BJ (cell line): ENCODE measurements at regions of chr3 and their contacts with region 1.

Region 1: GRCh38 chr3:56702490-56703315 is 19.6 kb upstream of the TASOR start:
- DNase-seq: peak; percentile 12
- H3K4me3 ChIP-seq: no peak overlapping the region
- H3K27me3 ChIP-seq: no peaks in the 10 kb centered on the region
- CTCF ChIP-seq: peak; percentile 78

Region 2: DNA sequence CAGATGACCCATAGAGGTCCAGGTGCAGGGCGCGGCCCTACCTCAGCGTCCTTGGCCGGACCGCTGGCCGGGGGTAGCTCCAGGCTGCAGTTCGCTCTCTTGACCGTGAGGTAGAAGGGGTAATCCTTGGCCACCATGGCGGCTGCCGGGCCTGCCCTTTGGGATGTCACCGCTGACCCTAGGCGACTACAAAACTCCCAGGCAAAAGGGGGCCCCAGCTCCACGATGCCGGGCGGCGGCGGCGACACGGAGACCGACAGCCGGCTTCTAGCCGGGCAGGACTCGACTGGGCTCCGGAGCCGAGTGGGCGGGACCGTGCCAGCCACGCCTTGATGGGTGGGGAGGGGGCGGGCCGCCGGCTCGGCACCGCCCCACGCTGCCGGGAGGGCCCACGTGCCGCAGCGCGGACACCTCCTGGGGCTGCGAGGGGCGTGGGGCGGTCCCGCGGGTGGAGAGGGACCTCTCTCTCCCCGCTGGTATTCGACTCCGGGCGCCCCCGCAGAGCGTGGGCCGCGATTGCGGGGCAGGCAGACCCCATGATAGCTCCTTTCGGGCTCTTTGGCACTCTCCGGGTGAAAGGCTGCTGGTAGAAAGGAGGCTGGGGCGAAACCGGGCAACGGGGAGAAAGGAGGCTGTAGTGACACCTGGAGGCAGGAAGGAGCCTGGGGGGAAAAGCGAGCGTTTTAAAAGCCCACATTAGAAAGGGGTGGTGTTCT is 99.1 kb after region 1 on chr3 and contains the start of gene ARHGEF3:
- CTCF ChIA-PET with region 1: interaction called, 136 read pairs
- POLR2A ChIA-PET with region 1: no interaction called
- DNase-seq: no peak
- H3K4me3 ChIP-seq: peak within 1 kb of the TSS; percentile 50
- H3K27me3 ChIP-seq: 0 out of 2 replicates have a peak, but pooled peaks cover 1% of the 10 kb centered on the region
- CTCF ChIP-seq: peak; percentile 49
- polyA plus RNA-seq, gene ARHGEF3: 2.0 and 2.1 TPM in 2 replicates

Region 3: DNA sequence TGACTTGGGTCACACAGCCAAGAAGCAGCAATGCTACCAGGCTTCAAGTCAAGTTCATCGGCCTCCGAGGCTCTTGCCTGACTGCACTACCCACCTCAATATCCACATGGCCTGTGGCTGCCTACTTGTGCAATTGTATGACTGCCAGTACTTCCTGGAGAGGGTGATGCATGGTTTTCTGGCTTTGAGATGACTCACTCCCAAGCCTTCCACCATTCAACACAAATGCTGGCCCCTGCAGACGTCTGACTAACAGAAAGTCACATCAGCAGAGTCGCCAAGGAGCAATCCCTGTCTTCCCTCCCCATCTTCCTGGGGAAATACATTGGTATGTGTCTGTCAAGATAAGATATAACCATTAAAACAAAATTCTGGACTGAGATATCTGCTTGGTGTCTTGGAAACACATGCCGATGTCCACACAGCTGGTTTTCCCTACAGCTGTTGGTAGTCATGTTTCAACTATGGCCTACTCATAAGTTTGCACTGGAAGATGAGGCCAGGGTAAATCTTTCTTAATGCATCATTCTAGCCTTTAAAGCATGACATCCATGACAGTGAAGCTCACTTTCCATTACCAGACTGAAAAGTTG is 278.2 kb after region 1 on chr3:
- CTCF ChIA-PET with region 1: interaction called, 141 read pairs
- POLR2A ChIA-PET with region 1: no interaction called
- DNase-seq: peak; percentile 90
- H3K4me3 ChIP-seq: no peak overlapping the region
- H3K27me3 ChIP-seq: no peaks in the 10 kb centered on the region
- CTCF ChIP-seq: no peak

Region 4: GRCh38 chr3:56988458-56989168 is 285.9 kb after region 1 on chr3:
- CTCF ChIA-PET with region 1: interaction called, 141 read pairs
- POLR2A ChIA-PET with region 1: interaction called, 4 read pairs
- DNase-seq: no peak
- H3K4me3 ChIP-seq: no peak overlapping the region
- H3K27me3 ChIP-seq: peaks cover 11% of the 10 kb centered on the region
- CTCF ChIP-seq: peak; percentile 75

Region 5: DNA sequence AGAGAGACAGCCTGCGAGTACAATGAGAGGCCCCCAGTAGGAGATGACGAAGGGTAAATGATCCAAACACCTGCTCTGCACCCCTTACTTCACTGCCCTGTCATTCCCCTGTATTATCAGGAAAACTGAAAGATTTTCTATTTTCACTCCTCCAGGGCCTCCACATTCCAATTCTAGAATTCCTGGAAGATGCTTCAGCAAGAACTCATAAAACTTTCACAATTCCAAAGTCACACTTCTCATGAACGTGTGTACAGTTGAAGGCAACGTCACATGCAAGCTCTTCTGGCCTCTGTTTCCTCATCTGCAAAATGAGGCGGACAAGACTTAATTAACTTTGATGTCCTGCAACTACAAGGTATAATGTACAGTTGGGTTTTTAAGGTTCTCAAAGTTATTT is 295.0 kb after region 1 on chr3:
- CTCF ChIA-PET with region 1: interaction called, 12 read pairs
- POLR2A ChIA-PET with region 1: no interaction called
- DNase-seq: no peak
- H3K4me3 ChIP-seq: no peak overlapping the region
- H3K27me3 ChIP-seq: no peaks in the 10 kb centered on the region
- CTCF ChIP-seq: no peak